ENCODE measurements at regions of chr1 and their contacts with region 1.

Region 1: GRCh38 chr1:89598450-89599331 is 34.2 kb upstream of the LRRC8C start:
- DNase-seq: no peak
- ATAC-seq: peak; percentile 87 to 91 (median 89)
- H3K4me3 ChIP-seq: no peak overlapping the region
- H3K27ac ChIP-seq: no peak overlapping the region
- H3K4me1 ChIP-seq: no peaks in the 10 kb centered on the region
- H3K27me3 ChIP-seq: no peaks in the 10 kb centered on the region
- CTCF ChIP-seq: peak; percentile 66 to 83 (median 68)
- POLR2A ChIP-seq: no peak

Region 2: DNA sequence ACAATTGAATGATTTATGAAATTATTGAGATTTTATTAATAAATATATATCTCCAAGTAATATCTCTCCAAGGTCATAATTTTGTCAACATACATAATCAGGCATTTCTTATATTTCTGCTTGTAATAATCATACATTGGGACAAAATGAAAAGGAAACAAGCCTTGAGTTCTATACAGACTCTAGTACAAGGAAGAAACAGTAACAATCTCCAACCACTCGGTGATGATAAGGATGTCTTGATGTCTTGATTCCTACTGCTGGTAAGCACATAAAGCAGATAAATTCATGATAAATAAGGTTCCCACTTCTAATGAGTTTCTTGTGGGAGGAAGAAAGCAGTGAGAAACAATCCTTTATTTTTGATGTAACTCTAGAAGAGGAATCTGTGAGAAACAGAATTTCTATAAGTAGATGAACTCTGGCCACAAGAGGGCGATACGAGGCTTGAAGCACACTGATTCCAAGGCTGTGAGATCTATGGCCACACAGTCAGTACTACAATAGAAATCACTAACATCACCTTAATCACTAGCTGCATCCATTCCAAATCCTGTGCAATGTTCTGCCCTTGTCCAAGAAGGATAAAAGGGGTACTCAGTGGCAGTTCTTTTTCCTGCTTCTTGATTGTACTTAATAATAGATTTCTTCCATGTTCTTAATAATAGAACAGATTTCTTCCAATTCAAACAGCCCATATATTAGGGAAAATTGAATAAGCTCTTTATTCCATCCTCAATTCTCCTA is 115.5 kb before region 1 on chr1:
- intact Hi-C with region 1: loop called in 1 of 2 experiments (anchors 5 kb)
- DNase-seq: peak; percentile 56 to 73 (median 56)
- ATAC-seq: peak; percentile 89 to 94 (median 90)
- H3K4me3 ChIP-seq: no peak overlapping the region
- H3K27ac ChIP-seq: no peak overlapping the region
- H3K4me1 ChIP-seq: no peaks in the 10 kb centered on the region
- H3K27me3 ChIP-seq: no peaks in the 10 kb centered on the region
- CTCF ChIP-seq: peak; percentile 70 to 90 (median 79)
- POLR2A ChIP-seq: no peak

Region 3: GRCh38 chr1:89524369-89525168 is 74.1 kb before region 1 on chr1 and contains the start of gene LRRC8B:
- intact Hi-C with region 1: loop called in 1 of 2 experiments (anchors 5 kb)
- DNase-seq: peak; percentile 95 to 97 (median 97)
- ATAC-seq: peak; percentile 96 to 99 (median 98)
- H3K4me3 ChIP-seq: peak within 1 kb of the TSS; percentile 70 to 93 (median 92)
- H3K27ac ChIP-seq: peak within 1 kb of the TSS; percentile 74 to 97 (median 92)
- H3K4me1 ChIP-seq: peaks cover 0 to 6% (median 0%) of the 10 kb centered on the region in 4 donors
- H3K27me3 ChIP-seq: no peaks in the 10 kb centered on the region
- CTCF ChIP-seq: no peak
- POLR2A ChIP-seq: peak; percentile 85
- total RNA-seq, gene LRRC8B: 1.8 to 11.3 (median 4.7) TPM

Region 4: DNA sequence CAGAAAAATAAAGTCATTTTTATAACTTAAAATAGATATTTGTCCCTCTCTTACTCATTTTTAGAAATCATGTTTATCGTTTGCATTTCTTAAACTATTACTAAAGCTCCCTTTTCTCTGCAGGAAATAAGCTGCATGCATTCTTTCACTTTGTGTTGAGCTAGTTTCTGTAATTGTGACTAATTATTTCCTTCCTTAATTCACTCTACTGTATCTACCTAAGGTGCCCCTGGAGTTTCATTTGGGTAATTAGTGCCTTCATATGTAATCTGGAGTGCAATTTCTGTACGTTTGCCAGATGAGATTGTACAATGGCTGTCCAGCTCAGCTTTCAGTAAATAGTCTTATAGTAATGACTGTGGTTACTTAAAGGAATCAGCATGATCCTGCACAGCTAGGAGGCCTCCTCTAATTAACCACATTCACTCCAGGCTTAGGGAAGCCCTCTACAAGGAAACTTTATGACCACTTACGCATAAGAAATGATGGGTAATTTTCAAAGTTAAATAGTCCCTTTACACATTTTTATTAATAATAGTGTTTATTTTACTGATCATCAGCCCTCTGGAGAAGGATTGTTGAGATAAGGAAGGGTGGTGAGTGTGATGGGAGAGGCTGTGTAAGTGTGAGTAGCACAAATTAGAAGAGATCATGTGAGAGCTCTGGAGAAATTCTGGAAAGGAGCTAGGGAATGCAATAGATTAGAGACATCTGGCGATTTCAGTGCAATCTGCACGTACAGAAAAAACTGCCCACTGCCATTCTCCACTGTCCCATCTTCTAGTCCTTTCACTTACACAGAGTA is 121.0 kb after region 1 on chr1:
- intact Hi-C with region 1: no loop called
- DNase-seq: no peak
- ATAC-seq: peak in 3 of 4 donors; percentile 39 to 67 (median 53)
- H3K4me3 ChIP-seq: no peak overlapping the region
- H3K27ac ChIP-seq: peak overlapping the region in 2 of 3 donors; percentile 18 to 33
- H3K4me1 ChIP-seq: no peaks in the 10 kb centered on the region
- H3K27me3 ChIP-seq: no peaks in the 10 kb centered on the region
- CTCF ChIP-seq: no peak
- POLR2A ChIP-seq: no peak